Motor neuron (in vitro differentiated cells): ENCODE measurements at regions of chr6 and their contacts with region 1.

Region 1: GRCh38 chr6:71383901-71384489 is 95.4 kb downstream of the OGFRL1 start:
- ATAC-seq: peak in 3 of 8 experiments; percentile 47 to 76 (median 75)
- H3K4me3 ChIP-seq: no peak overlapping the region
- H3K27ac ChIP-seq: no peak overlapping the region
- H3K4me1 ChIP-seq: no peaks in the 10 kb centered on the region

Region 2: DNA sequence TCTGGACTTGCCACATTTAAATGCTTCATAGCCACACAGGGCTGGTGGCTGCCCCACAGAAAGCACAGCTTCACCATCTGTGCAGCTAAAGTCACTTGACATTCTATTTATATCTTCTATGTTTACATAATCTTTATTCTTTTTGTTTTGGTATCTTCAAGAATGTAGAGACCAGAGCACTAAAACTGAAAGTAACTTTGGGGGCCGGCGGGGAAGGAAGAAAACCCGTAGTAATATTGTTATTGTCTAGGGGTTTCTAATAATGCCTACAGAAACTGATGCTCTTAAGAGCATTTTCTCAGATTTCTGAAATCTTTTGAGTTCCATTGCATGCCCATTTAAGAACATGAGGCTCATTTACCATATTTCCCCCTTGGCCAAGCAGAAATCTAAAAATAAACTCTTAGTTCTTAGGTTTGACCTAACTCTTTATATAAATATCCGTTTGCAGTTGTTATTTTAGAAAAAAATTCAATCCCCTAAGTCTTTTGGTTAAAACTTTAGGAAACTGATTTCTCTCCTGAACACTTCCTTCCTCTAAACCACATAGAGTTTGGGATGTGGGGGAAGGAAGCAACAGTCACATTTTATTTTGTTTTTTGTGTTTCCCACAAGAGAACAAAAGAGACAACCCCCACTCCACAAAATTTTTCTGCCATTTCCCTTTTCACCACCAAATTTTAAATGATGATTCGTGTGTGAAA is 112.2 kb after region 1 on chr6:
- in situ Hi-C with region 1: loop called in 3 of 9 experiments (anchors 10 to 25 kb)
- ATAC-seq: peak in 2 of 8 experiments; percentile 18 to 70
- H3K4me3 ChIP-seq: no peak overlapping the region
- H3K27ac ChIP-seq: no peak overlapping the region
- H3K4me1 ChIP-seq: no peaks in the 10 kb centered on the region

Region 3: GRCh38 chr6:71510057-71510713 is 126.2 kb after region 1 on chr6:
- in situ Hi-C with region 1: loop called in 2 of 9 experiments (anchors 10 kb)
- ATAC-seq: peak in 5 of 8 experiments; percentile 18 to 96 (median 82)
- H3K4me3 ChIP-seq: no peak overlapping the region
- H3K27ac ChIP-seq: no peak overlapping the region
- H3K4me1 ChIP-seq: no peaks in the 10 kb centered on the region

Region 4: DNA sequence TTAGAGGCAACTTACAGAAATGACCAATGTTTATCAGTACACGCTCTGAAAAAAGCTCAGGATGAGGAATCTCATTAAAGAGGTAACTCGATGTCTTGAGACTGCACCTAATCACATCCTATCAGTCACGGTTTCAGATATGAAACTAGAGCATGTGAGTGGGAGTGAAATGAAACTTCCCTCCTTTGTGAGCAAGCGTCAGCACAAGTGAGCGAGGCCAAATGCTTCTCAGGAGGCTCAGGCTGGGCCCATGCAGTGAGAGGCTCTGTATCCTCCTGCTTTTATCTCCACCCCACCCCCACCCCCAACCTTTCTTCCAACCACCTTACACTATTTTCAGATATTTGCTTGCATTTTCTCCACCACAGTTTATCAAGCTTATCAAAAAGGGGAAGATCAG is 361.5 kb after region 1 on chr6:
- in situ Hi-C with region 1: no loop called
- ATAC-seq: no peak
- H3K4me3 ChIP-seq: no peak overlapping the region
- H3K27ac ChIP-seq: no peak overlapping the region
- H3K4me1 ChIP-seq: no peaks in the 10 kb centered on the region

Region 5: GRCh38 chr6:72826037-72826436 is 1442.0 kb after region 1 on chr6:
- in situ Hi-C with region 1: no loop called
- ATAC-seq: no peak
- H3K4me3 ChIP-seq: no peak overlapping the region
- H3K27ac ChIP-seq: no peak overlapping the region
- H3K4me1 ChIP-seq: peaks cover 0 to 5% of the 10 kb centered on the region in 2 donors